Endothelial cell of umbilical vein (primary cell): ENCODE measurements at regions of chr20 and their contacts with region 1.

Region 1: GRCh38 chr20:52761867-52762266 is 210.3 kb upstream of the TSHZ2 start:
- DNase-seq: no peak
- H3K4me3 ChIP-seq: no peak overlapping the region
- H3K27ac ChIP-seq: no peak overlapping the region
- H3K4me1 ChIP-seq: no peaks in the 10 kb centered on the region
- H3K27me3 ChIP-seq: no peaks in the 10 kb centered on the region
- CTCF ChIP-seq: no peak
- POLR2A ChIP-seq: no peak

Region 2: GRCh38 chr20:52828199-52828598 is 66.3 kb after region 1 on chr20:
- CTCF ChIA-PET with region 1: no interaction called
- POLR2A ChIA-PET with region 1: no interaction called
- dilution Hi-C with region 1: no loop called
- intact Hi-C with region 1: loop called (anchors 10 kb)
- DNase-seq: no peak
- H3K4me3 ChIP-seq: no peak overlapping the region
- H3K27ac ChIP-seq: no peak overlapping the region
- H3K4me1 ChIP-seq: no peaks in the 10 kb centered on the region
- H3K27me3 ChIP-seq: no peaks in the 10 kb centered on the region
- CTCF ChIP-seq: no peak
- POLR2A ChIP-seq: no peak

Region 3: DNA sequence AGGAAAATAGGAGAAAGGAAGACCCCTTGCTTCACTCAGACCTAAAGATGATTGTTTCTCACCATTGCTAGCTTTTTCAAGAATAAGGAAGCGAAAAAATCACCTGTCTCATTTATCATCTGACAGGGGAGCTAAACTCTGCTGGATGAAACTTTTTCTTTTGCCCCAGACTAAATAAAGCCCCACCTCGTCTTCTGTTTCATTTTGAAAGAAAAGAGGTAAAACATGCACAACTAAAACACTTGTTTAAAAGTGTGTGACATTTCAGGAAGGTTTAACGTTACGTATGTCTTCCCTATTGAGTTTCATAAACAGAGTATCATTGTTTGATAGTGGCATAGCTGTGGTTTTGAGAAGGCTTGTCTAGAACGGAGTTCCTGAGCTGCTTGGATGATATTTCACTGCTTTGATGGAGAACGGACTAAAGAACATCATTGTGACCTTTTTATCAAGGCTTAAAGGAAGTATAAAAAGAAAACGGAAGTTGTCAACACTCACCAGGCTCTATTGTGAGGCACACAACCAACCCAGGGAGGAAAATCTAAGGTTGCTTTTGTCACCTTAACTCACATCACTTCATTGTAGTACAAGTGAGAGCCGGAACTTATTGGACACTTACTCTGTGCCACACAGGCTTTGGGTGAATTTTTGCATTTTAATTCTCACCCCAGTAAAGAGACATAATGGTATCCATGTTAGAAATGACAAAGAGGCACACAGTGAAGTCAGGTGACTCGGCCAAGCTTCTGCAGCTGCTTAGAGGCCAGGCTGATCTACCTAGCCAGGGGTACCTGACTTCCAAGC is 239.8 kb after region 1 on chr20:
- CTCF ChIA-PET with region 1: no interaction called
- POLR2A ChIA-PET with region 1: no interaction called
- dilution Hi-C with region 1: no loop called
- intact Hi-C with region 1: no loop called
- DNase-seq: no peak
- H3K4me3 ChIP-seq: no peak overlapping the region
- H3K27ac ChIP-seq: no peak overlapping the region
- H3K4me1 ChIP-seq: no peaks in the 10 kb centered on the region
- H3K27me3 ChIP-seq: no peaks in the 10 kb centered on the region
- CTCF ChIP-seq: no peak
- POLR2A ChIP-seq: no peak